ENCODE measurements at regions of chr11 and their contacts with region 1.

Region 1: GRCh38 chr11:113587308-113587739 is 112.1 kb upstream of the DRD2 start:
- DNase-seq: peak; percentile 79
- H3K4me3 Mint-ChIP-seq: peak overlapping the region; percentile 40
- H3K27ac Mint-ChIP-seq: peak overlapping the region; percentile 85
- H3K4me1 Mint-ChIP-seq: peaks cover 19% of the 10 kb centered on the region
- H3K27me3 Mint-ChIP-seq: peaks cover 2% of the 10 kb centered on the region

Region 2: GRCh38 chr11:113562981-113563461 is 24.3 kb before region 1 on chr11:
- intact Hi-C with region 1: loop called (anchors 1 kb)
- DNase-seq: no peak
- H3K4me3 Mint-ChIP-seq: no peak overlapping the region
- H3K27ac Mint-ChIP-seq: no peak overlapping the region
- H3K4me1 Mint-ChIP-seq: no peaks in the 10 kb centered on the region
- H3K27me3 Mint-ChIP-seq: peaks cover 12% of the 10 kb centered on the region

Region 3: DNA sequence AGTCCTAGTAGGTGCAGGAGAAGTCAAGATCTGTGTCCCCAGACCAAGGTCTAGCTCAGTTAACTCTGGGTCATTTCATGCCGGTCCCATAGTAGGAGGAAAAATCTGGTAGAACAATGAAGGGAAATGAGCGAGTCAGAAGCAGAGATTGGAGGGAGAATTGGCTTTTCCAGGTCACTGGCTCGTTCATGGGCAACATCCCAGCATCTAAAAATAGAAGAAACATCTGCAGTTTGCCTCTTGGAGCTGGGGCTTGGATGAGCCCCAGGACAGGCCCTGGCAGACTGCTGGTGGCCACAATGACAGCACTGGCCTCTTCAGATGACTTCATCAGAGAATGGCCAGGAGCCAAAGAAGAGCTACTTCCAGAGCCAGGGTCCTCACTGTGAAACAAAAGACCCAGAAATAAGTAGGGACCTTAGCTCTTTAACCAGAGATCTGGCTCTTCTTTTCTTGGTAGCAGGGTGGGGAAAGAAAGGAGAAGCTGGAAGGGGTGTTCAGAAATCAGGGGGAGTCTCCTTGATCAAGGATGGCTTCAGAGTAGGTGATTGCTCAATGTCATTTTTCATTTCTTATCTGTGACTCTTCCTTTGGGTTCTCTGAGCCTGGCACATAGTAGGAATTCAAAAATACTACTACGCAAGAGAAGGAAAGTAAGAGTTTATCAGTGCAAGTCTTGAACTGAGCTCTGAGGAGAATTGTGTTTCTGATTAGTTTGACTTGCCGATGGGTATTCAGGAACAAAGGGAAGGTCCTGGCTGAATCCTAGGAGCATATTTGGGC is 16.1 kb after region 1 on chr11:
- intact Hi-C with region 1: no loop called
- DNase-seq: no peak
- H3K4me3 Mint-ChIP-seq: no peak overlapping the region
- H3K27ac Mint-ChIP-seq: no peak overlapping the region
- H3K4me1 Mint-ChIP-seq: no peaks in the 10 kb centered on the region
- H3K27me3 Mint-ChIP-seq: peaks cover 20% of the 10 kb centered on the region

Region 4: DNA sequence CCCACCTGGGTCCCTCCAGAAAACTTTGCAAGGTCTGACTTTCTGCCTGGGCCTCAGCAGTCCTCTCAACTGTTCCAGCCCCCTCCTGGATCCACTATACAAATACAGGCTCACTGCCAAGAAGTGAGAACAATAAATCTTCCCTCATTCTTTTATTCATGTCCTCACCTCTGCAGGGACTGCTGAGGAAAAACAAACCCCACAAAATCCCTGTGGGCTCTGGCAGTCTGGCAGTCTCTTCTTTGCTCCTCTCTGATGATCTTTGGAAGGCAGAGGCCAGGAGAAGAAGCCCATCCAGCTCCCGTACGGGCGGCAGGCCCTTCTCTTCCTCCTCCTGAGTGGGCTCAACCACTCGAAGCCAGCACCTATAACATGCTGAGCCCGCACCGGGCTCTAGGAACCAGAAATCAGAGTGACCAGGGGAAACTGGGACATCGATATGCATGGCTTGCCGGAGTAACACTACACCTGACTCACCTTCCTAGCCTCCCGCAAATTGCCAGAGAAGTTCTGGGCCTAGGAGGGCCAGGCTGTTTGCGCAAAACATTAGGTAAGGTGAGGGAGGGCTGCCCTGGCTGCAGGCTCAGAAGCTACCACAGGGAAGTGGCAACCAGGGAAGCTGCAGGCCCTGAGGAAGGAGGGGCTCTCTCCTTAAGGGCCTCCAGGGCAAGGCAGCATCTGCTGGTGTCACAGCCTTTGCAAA is 94.5 kb after region 1 on chr11:
- intact Hi-C with region 1: no loop called
- DNase-seq: no peak
- H3K4me3 Mint-ChIP-seq: no peak overlapping the region
- H3K27ac Mint-ChIP-seq: no peak overlapping the region
- H3K4me1 Mint-ChIP-seq: peaks cover 2% of the 10 kb centered on the region
- H3K27me3 Mint-ChIP-seq: peaks cover 3% of the 10 kb centered on the region

Region 5: GRCh38 chr11:114058871-114059277 is 471.6 kb after region 1 on chr11:
- intact Hi-C with region 1: no loop called
- DNase-seq: peak; percentile 63
- H3K4me3 Mint-ChIP-seq: peak overlapping the region; percentile 87
- H3K27ac Mint-ChIP-seq: no peak overlapping the region
- H3K4me1 Mint-ChIP-seq: peaks cover 7% of the 10 kb centered on the region
- H3K27me3 Mint-ChIP-seq: peaks cover 75% of the 10 kb centered on the region

Measured in activated CD4-positive, alpha-beta T cell treated with anti-CD3 and anti-CD28 coated beads, Interleukin-2, amount 10 ng/mL, durations not matched to agents 24 days and 14 days (primary cell).